ENCODE measurements at regions of chr4 and their contacts with region 1.

Region 1: DNA sequence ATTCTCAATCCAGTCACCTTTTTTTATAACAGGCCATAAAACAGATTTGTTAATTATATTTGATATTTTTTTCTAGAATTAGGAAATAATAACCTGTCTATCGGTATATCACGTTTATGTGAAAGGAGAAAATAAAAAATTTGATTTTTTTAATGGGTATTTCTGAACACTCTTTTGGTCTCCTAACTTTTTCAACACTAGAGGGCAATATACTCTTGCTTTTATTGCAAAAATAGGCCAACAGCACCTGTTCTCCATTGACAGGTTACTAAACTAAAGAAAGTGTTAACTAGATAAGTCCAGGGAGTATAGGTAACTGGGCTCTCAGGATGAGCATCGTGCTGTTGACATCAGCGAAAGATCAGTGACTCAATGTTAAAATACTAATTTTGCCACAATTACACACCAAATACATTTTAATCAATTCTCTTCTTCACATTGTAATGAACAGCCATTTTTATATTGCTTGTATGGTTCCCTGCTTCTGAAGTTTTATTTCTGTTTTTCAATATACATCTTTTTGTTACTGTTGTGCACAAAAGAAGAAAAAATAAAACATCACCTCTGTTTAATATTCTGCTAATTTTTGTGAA is 22.8 kb downstream of the NDST4 start:
- DNase-seq: no peak
- H3K4me3 ChIP-seq: no peak overlapping the region
- H3K27ac ChIP-seq: no peak overlapping the region
- H3K4me1 ChIP-seq: no peaks in the 10 kb centered on the region
- H3K27me3 ChIP-seq: no peaks in the 10 kb centered on the region
- CTCF ChIP-seq: peak; percentile 35 to 60 (median 46)
- POLR2A ChIP-seq: no peak

Region 2: DNA sequence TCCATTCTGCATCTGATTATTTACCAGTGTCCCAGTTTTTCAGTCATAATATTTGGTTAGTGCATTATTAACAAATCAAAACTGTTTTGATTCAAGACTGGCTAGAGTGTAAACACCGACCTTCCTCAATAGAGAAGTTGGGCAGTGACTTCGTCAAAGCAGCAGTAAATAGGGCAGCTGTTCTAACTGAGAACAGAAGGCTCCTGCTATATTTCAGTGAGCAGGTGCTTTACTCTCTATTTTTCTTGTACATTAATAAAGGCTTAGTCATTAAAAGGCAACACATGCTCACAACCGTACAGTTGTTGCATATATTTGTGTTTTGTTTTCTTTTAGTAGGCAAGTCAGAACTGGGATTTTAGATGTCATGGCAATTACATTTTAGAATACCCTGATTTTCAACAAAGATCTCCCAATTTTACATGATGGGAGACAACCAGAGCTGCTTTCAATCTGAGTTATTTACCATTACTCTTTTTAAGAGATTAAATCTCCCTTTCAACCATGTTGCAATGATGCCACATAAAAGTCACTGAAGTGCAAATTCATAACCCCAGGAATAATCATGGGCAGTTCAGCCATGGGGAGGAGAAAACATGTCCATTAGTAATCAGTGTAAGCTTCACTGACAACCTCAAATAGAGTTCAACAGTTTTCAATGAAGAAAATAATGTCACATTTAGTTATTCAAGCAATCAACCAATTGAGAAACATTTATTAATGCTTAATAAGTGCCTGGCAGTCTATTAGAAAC is 210.5 kb before region 1 on chr4:
- intact Hi-C with region 1: no loop called
- DNase-seq: no peak
- H3K4me3 ChIP-seq: no peak overlapping the region
- H3K27ac ChIP-seq: no peak overlapping the region
- H3K4me1 ChIP-seq: no peaks in the 10 kb centered on the region
- H3K27me3 ChIP-seq: no peaks in the 10 kb centered on the region
- CTCF ChIP-seq: no peak
- POLR2A ChIP-seq: no peak

Region 3: GRCh38 chr4:115259642-115260041 is 169.1 kb after region 1 on chr4:
- intact Hi-C with region 1: no loop called
- DNase-seq: no peak
- H3K4me3 ChIP-seq: no peak overlapping the region
- H3K27ac ChIP-seq: no peak overlapping the region
- H3K4me1 ChIP-seq: no peaks in the 10 kb centered on the region
- H3K27me3 ChIP-seq: no peaks in the 10 kb centered on the region
- CTCF ChIP-seq: no peak
- POLR2A ChIP-seq: no peak

Region 4: GRCh38 chr4:115484479-115484878 is 393.9 kb after region 1 on chr4:
- intact Hi-C with region 1: no loop called
- DNase-seq: no peak
- H3K4me3 ChIP-seq: no peak overlapping the region
- H3K27ac ChIP-seq: no peak overlapping the region
- H3K4me1 ChIP-seq: no peaks in the 10 kb centered on the region
- H3K27me3 ChIP-seq: no peaks in the 10 kb centered on the region
- CTCF ChIP-seq: no peak
- POLR2A ChIP-seq: no peak

Region 5: GRCh38 chr4:115851918-115852766 is 761.6 kb after region 1 on chr4:
- intact Hi-C with region 1: loop called in 1 of 2 experiments (anchors 10 kb)
- DNase-seq: peak in 6 of 7 donors; percentile 19 to 66 (median 47)
- H3K4me3 ChIP-seq: no peak overlapping the region
- H3K27ac ChIP-seq: no peak overlapping the region
- H3K4me1 ChIP-seq: no peaks in the 10 kb centered on the region
- H3K27me3 ChIP-seq: no peaks in the 10 kb centered on the region
- CTCF ChIP-seq: peak in 5 of 6 experiments; percentile 8 to 43 (median 35)
- POLR2A ChIP-seq: no peak